Activated naive CD4-positive, alpha-beta T cell treated with anti-CD3 and anti-CD28 coated beads for 36 hours (primary cell): ENCODE measurements at regions of chr5 and their contacts with region 1.

Region 1: GRCh38 chr5:157130925-157131324 is 11.7 kb downstream of the MED7 start:
- DNase-seq: no peak
- H3K4me3 Mint-ChIP-seq: no peak overlapping the region
- H3K27ac Mint-ChIP-seq: no peak overlapping the region
- H3K4me1 Mint-ChIP-seq: peaks cover 38% of the 10 kb centered on the region
- H3K27me3 Mint-ChIP-seq: no peaks in the 10 kb centered on the region

Region 2: DNA sequence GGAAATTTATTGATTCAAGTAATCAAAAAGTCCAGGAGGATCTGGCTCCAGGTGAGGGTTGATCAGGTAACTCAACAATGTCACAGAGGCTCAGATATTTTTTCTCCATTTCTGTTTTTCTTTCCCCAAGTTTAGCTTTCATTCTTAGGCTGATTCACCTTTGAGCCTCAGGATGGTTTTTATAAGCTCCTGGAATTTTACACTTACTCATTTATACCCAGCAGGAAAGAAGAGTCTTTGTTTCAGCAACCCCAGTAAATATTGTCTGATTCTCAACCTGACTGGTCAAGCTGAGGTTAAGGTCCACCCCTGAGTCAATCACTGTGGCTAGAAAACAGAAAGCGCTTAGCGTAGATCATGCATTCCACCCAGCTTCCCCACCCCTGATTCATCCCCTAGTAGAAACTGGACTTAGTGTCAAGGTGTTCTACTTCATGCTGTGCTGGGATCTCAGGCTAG is 1616.8 kb before region 1 on chr5:
- CTCF ChIA-PET with region 1: no interaction called
- intact Hi-C with region 1: no loop called
- DNase-seq: no peak
- H3K4me3 Mint-ChIP-seq: no peak overlapping the region
- H3K27ac Mint-ChIP-seq: no peak overlapping the region
- H3K4me1 Mint-ChIP-seq: no peaks in the 10 kb centered on the region
- H3K27me3 Mint-ChIP-seq: peaks cover 2% of the 10 kb centered on the region

Region 3: GRCh38 chr5:155616779-155617392 is 1514.0 kb before region 1 on chr5:
- CTCF ChIA-PET with region 1: no interaction called
- intact Hi-C with region 1: loop called (anchors 2 kb)
- DNase-seq: peak; percentile 69
- H3K4me3 Mint-ChIP-seq: no peak overlapping the region
- H3K27ac Mint-ChIP-seq: no peak overlapping the region
- H3K4me1 Mint-ChIP-seq: no peaks in the 10 kb centered on the region
- H3K27me3 Mint-ChIP-seq: peaks cover 32% of the 10 kb centered on the region

Region 4: DNA sequence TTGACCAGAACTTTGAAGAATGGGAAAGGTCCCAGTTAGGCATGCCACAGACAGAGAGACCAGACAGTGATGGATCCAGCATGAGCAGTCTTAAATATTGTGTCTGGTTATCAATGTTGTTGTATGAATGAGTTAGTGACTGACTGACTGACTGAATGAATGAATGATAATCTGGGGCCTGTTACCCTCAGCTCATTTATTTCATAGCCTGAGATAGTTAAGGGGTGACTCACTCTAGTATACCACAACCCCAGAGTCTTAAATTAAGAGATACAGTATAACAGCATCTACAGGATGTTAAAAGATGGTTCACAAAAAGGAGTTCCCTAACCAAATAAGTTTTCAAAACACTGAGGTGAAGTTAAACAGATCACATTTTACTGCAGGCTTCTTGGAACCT is 670.5 kb before region 1 on chr5:
- CTCF ChIA-PET with region 1: no interaction called
- intact Hi-C with region 1: loop called (anchors 10 kb)
- DNase-seq: no peak
- H3K4me3 Mint-ChIP-seq: no peak overlapping the region
- H3K27ac Mint-ChIP-seq: no peak overlapping the region
- H3K4me1 Mint-ChIP-seq: no peaks in the 10 kb centered on the region
- H3K27me3 Mint-ChIP-seq: peaks cover 13% of the 10 kb centered on the region

Region 5: DNA sequence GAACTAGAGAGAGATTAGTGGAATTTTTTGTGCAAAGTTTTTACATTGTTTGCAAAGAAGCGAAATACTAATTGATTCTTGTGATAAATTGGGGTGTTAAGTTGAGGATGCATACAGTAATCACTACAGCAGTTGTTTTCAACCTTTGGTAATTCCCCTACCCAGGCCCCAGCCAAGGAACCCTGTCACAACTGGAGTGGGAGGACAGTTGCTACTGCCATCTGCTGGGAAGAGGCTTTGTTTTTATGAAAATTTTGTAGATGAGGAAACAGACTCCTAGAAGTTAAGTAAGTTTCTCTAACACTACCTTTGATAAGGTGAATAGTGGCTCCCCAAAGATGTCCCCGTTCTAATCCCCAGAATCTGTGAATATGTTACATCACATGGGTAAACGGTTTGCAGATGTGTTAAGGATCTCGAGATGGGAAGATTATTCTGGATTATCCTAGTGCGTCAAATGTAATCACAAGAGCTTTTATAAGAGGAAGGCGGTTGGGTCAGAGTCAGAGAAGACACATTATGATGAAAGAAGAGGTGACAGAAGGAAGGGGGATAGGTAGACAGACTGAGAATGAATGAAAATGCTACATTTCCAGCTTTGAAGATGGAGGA is 314.8 kb before region 1 on chr5:
- CTCF ChIA-PET with region 1: interaction called, 4 read pairs
- intact Hi-C with region 1: loop called (anchors 2 kb)
- DNase-seq: peak; percentile 77
- H3K4me3 Mint-ChIP-seq: no peak overlapping the region
- H3K27ac Mint-ChIP-seq: peak overlapping the region; percentile 28
- H3K4me1 Mint-ChIP-seq: peaks cover 7% of the 10 kb centered on the region
- H3K27me3 Mint-ChIP-seq: no peaks in the 10 kb centered on the region

Region 6: GRCh38 chr5:156920042-156920860 is 210.7 kb before region 1 on chr5:
- CTCF ChIA-PET with region 1: interaction called, 3 read pairs
- intact Hi-C with region 1: loop called (anchors 1 kb)
- DNase-seq: peak; percentile 89
- H3K4me3 Mint-ChIP-seq: peak overlapping the region; percentile 55
- H3K27ac Mint-ChIP-seq: peak overlapping the region; percentile 93
- H3K4me1 Mint-ChIP-seq: peaks cover 70% of the 10 kb centered on the region
- H3K27me3 Mint-ChIP-seq: no peaks in the 10 kb centered on the region

Region 7: GRCh38 chr5:157026789-157027424 is 104.0 kb before region 1 on chr5:
- CTCF ChIA-PET with region 1: interaction called, 5 read pairs
- intact Hi-C with region 1: loop called (anchors 1 kb)
- DNase-seq: peak; percentile 34
- H3K4me3 Mint-ChIP-seq: no peak overlapping the region
- H3K27ac Mint-ChIP-seq: no peak overlapping the region
- H3K4me1 Mint-ChIP-seq: peaks cover 34% of the 10 kb centered on the region
- H3K27me3 Mint-ChIP-seq: no peaks in the 10 kb centered on the region

Region 8: DNA sequence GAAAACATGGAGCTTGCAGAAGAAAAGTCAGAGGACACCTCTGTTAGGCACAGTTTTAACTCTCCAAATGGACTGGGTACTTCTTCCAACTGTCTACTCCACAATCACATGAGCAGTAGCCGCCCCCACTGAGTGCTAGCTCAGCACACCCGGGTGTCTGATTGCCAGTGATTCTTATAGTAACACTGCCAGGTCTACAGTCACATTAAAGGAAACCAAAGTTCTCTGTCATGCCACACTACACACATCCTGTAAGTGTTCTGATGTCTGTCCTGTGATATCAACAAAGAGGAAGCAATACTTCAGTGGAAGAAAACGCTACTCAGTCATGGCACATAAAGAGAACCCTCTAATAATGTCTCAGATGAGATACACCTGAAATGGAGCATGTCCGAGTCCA is 21.9 kb before region 1 on chr5 and contains the start of gene HAVCR2:
- CTCF ChIA-PET with region 1: interaction called, 6 read pairs
- intact Hi-C with region 1: loop called (anchors 2 kb)
- DNase-seq: peak; percentile 87
- H3K4me3 Mint-ChIP-seq: peak within 1 kb of the TSS; percentile 65
- H3K27ac Mint-ChIP-seq: peak within 1 kb of the TSS; percentile 87
- H3K4me1 Mint-ChIP-seq: peaks cover 40% of the 10 kb centered on the region
- H3K27me3 Mint-ChIP-seq: no peaks in the 10 kb centered on the region
- total RNA-seq, gene HAVCR2: 10.2 to 10.4 TPM